Cardiac septum (tissue), 1 donor: ENCODE measurements at regions of chr15 and their contacts with region 1.

Region 1: GRCh38 chr15:25933456-25934158 is 70.5 kb upstream of the ATP10A start:
- DNase-seq: peak; percentile 80

Region 2: GRCh38 chr15:25508369-25509002 is 425.1 kb before region 1 on chr15:
- intact Hi-C with region 1: loop called (anchors 5 kb)
- DNase-seq: no peak

Region 3: GRCh38 chr15:25693321-25694237 is 240.0 kb before region 1 on chr15:
- intact Hi-C with region 1: loop called (anchors 10 kb)
- DNase-seq: peak; percentile 72

Region 4: GRCh38 chr15:25739687-25740121 is 193.9 kb before region 1 on chr15:
- intact Hi-C with region 1: loop called (anchors 10 kb)
- DNase-seq: no peak

Region 5: DNA sequence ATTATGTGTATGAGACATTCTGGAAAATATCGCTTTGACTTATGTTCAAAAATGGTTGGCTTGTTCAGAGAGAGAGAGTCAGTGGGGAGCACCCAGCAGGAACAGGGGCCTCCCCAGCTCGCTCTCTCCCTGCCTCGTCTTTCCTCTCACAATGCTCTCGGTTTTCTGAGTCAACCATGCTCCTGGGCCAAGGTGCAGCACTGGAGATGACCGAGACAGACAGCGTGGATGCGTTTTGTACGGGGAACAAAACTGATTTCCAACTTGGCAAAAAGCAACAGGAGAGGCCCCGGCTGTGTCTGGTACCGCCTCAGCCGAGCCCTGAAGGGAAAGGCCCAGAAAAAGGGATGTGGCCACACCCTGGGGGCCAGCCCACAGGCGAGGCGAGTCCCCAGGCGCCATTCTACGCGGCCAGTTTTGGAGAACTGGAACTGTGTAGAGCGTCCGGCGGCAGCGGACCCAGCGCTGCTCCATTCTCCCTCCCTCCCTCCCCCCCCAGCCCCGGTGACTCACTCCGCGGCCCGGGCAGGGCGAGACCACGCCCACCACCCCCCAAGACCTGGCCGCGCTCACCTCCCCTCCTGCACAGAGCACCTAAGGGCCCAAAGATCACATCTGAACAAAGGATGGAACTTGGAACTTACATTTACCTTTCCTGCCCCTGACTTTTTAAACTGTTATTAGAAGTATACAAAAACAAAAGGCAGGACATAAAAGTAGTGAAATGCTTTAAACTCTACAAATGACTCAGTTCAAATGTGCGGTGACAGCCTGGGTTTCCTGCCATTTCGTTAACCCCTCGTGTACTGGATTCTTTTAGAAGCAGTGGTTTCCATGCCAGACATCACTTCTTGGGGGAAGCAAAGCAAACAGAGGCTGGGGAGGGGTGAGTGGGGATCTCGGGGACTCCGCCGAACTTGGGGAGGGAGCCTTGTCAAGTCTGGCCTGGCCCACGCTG is 83.2 kb before region 1 on chr15:
- intact Hi-C with region 1: no loop called
- DNase-seq: peak; percentile 87